Activated CD8-positive, alpha-beta T cell treated with anti-CD3 and anti-CD28 coated beads for 36 hours (primary cell): ENCODE measurements at regions of chr10 and their contacts with region 1.

Region 1: GRCh38 chr10:6088721-6089390 is at the start of gene RBM17:
- DNase-seq: peak; percentile 98
- ATAC-seq: peak; percentile 79
- H3K4me3 Mint-ChIP-seq: peak within 1 kb of the TSS; percentile 84
- H3K27ac Mint-ChIP-seq: peak within 1 kb of the TSS; percentile 81
- H3K4me1 Mint-ChIP-seq: peaks cover 60% of the 10 kb centered on the region
- H3K27me3 Mint-ChIP-seq: no peaks in the 10 kb centered on the region
- CTCF ChIP-seq: peak; percentile 100
- total RNA-seq, gene RBM17: 284 to 285 TPM

Region 2: GRCh38 chr10:5977471-5978229 is 111.2 kb before region 1 on chr10 and contains the start of gene IL15RA:
- CTCF ChIA-PET with region 1: interaction called, 10 read pairs
- POLR2A ChIA-PET with region 1: interaction called, 7 read pairs
- intact Hi-C with region 1: no loop called
- DNase-seq: peak; percentile 94
- ATAC-seq: peak; percentile 73
- H3K4me3 Mint-ChIP-seq: peak within 1 kb of the TSS; percentile 95
- H3K27ac Mint-ChIP-seq: peak within 1 kb of the TSS; percentile 97
- H3K4me1 Mint-ChIP-seq: peaks cover 30% of the 10 kb centered on the region
- H3K27me3 Mint-ChIP-seq: peaks cover 7% of the 10 kb centered on the region
- CTCF ChIP-seq: peak; percentile 15
- total RNA-seq, gene IL15RA: 23.5 to 25.1 TPM

Region 3: DNA sequence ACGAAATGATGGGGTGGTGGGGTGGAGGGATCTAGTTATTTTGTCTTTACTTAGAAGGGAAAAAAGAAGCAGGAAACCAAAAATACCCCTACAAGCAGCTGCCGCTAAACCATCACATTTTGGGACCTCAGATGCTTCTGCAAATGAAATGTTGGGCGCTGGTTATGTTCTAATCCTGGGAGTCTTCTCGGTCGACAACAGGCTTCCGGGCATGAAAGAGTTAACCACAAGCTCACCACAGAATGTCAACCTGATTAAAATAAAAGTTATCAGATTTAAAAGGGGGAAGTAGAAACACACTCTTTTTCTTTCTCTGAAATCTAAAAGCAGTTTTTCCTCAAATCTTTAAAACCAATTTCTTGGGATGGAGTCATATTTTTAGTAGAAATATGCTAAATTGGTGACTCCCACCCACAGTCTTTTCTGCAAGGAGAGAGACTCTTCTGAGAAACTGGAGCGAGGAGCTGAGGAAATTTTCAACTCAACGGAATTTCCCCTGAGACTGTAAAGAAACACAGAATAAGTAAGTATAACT is 43.5 kb before region 1 on chr10:
- CTCF ChIA-PET with region 1: interaction called, 118 read pairs
- POLR2A ChIA-PET with region 1: interaction called, 846 read pairs
- intact Hi-C with region 1: loop called (anchors 5 kb)
- DNase-seq: peak; percentile 79
- ATAC-seq: peak; percentile 40
- H3K4me3 Mint-ChIP-seq: peak overlapping the region; percentile 65
- H3K27ac Mint-ChIP-seq: peak overlapping the region; percentile 97
- H3K4me1 Mint-ChIP-seq: peaks cover 91% of the 10 kb centered on the region
- H3K27me3 Mint-ChIP-seq: no peaks in the 10 kb centered on the region
- CTCF ChIP-seq: no peak

Region 4: GRCh38 chr10:6062101-6062771 is 26.6 kb before region 1 on chr10 and contains the start of gene IL2RA:
- CTCF ChIA-PET with region 1: interaction called, 118 read pairs
- POLR2A ChIA-PET with region 1: interaction called, 846 read pairs
- intact Hi-C with region 1: no loop called
- DNase-seq: peak; percentile 85
- ATAC-seq: peak; percentile 75
- H3K4me3 Mint-ChIP-seq: peak within 1 kb of the TSS; percentile 94
- H3K27ac Mint-ChIP-seq: peak within 1 kb of the TSS; percentile 99
- H3K4me1 Mint-ChIP-seq: peaks cover 55% of the 10 kb centered on the region
- H3K27me3 Mint-ChIP-seq: no peaks in the 10 kb centered on the region
- CTCF ChIP-seq: no peak
- total RNA-seq, gene IL2RA: 868 to 874 TPM

Region 5: DNA sequence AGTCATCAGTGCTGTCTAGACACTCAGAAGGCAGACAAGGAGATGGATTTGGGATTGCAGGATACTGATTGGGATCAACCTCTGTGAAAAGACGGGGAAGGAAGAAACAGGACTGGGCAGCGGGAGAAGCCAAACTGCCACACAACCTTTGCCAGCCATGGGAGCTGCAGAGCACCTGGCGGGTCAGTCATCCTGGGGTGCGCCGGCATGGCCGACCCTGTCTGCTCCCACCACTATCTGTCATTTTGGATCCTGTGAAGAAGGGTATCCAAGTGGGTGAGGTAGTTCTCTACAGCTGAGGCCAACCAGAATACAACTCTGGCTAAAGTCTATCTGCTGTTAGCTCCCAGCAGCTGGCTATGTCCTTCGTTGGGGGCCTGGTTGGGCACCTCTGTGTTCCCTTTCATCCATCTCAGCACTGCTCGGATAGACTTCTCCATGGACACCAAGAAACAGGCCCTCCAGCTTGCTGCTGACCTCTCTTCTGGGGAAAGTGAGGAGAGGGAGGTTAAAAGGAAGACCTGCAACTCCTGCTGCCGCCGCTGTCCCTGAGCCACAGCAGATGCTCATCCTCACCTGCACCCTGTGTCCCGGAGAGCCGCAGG is 11.7 kb before region 1 on chr10:
- CTCF ChIA-PET with region 1: interaction called, 59 read pairs
- POLR2A ChIA-PET with region 1: interaction called, 188 read pairs
- intact Hi-C with region 1: no loop called
- DNase-seq: no peak
- ATAC-seq: no peak
- H3K4me3 Mint-ChIP-seq: no peak overlapping the region
- H3K27ac Mint-ChIP-seq: no peak overlapping the region
- H3K4me1 Mint-ChIP-seq: peaks cover 45% of the 10 kb centered on the region
- H3K27me3 Mint-ChIP-seq: peaks cover 1% of the 10 kb centered on the region
- CTCF ChIP-seq: no peak